ENCODE measurements at regions of chr15 and their contacts with region 1.

Region 1: GRCh38 chr15:84658080-84658787 is at the start of gene NMB:
- DNase-seq: peak; percentile 89 to 99
- ATAC-seq: peak; percentile 78 to 85
- H3K4me3 ChIP-seq: peak within 1 kb of the TSS; percentile 47
- H3K27ac ChIP-seq: peak within 1 kb of the TSS; percentile 83 to 88
- H3K4me1 ChIP-seq: peaks cover 29% of the 10 kb centered on the region
- CTCF ChIP-seq: peak; percentile 83
- EP300 ChIP-seq: no peak
- POLR2A ChIP-seq: peak; percentile 26
- RAD21 ChIP-seq: peak; percentile 38 to 73
- polyA plus RNA-seq, gene NMB: 10.1 and 16.1 TPM in 2 replicates

Region 2: DNA sequence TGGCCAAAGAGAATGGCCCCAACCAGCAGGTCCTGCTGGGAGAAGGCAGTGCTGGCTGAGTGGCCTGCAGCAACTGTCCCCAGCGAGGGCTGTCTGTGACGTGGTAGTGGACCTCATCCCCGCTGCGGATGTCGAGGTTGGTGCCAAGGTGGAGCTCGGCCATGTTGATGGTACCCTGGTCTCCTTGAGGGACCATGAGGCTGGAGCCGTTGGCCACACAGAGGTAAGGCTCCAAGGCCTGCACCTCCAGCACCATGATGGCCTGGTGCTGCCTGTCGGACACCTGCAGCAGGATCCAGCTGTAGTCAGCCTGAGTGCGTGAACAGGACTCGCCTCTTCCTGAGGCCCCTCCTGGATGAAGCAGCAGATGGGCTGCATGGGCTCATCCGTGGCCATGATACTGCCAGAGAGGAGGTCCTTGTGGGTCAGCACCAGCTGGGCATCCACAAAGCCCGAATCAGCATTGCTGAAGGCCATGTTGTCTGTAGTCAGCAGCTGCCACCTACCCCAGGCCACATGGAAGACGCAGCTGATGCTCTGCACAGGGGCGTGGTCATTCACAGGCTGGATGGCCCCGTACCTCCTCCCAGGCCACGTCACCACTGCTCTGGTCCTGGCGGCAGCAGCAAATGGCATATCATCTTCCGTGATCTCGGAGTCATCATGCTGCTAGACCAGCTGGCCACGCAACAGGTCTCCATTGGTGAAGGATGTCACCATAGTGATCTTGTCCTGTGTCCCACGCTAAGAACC is 255.2 kb before region 1 on chr15:
- CTCF ChIA-PET with region 1: no interaction called
- POLR2A ChIA-PET with region 1: no interaction called
- DNase-seq: no peak
- ATAC-seq: no peak
- H3K4me3 ChIP-seq: no peak overlapping the region
- H3K27ac ChIP-seq: no peak overlapping the region
- H3K4me1 ChIP-seq: no peaks in the 10 kb centered on the region
- CTCF ChIP-seq: no peak
- EP300 ChIP-seq: no peak
- POLR2A ChIP-seq: no peak
- RAD21 ChIP-seq: no peak

Region 3: DNA sequence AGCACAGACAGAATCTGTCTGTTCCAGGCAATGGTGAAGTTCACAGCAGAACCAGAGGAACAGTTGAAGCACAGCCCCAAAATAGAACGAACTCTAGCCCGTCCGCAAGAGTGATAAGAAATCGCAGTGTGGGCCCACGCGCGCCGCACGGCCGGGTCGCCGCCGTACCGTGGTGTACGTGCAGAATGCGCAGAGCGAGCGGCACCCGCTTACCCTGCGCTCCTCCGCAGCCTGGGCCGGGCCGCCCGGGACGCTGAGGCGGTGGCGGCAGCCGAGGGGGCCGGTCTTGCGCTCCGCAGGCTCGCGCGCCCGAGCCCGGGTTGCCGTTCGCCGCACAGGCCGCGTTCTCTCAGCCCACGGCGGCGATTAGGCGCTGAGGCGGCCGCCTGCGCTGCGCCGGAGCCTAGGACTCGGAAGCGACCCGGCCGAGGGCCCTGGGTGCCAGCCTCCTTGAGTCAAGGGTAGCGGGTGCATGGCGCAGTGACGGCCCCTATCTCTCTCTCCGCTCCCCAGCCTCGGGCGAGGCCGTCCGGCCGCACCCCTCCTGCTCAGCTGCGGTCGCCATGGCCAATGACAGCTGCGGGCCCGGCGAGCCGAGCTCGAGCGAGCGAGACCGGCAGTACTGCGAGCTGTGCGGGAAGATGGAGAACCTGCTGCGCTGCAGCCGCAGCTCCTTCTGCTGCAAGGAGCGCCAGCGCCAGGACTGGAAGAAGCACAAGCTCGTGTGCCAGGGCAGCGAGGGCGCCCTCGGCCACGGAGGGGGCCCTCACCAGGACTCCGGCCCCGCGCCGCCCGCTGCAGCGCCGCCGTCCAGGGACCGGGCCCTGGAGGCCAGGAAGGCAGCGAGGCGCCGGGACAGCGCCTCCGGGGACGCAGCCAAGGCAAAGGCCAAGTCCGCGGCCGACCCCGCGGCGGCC is 24.7 kb before region 1 on chr15:
- CTCF ChIA-PET with region 1: interaction called, 11 read pairs
- POLR2A ChIA-PET with region 1: interaction called, 11 read pairs
- DNase-seq: peak in 1 of 2 experiments; percentile 78
- ATAC-seq: peak; percentile 72 to 77
- H3K4me3 ChIP-seq: peak overlapping the region; percentile 51
- H3K27ac ChIP-seq: peak overlapping the region; percentile 63 to 87
- H3K4me1 ChIP-seq: peaks cover 24% of the 10 kb centered on the region; the same call in 2 of the 3 replicates
- CTCF ChIP-seq: peak; percentile 31; the same call in 2 of the 3 replicates
- EP300 ChIP-seq: no peak
- POLR2A ChIP-seq: peak; percentile 35
- RAD21 ChIP-seq: no peak; a peak in 2 of 5 replicates

Region 4: DNA sequence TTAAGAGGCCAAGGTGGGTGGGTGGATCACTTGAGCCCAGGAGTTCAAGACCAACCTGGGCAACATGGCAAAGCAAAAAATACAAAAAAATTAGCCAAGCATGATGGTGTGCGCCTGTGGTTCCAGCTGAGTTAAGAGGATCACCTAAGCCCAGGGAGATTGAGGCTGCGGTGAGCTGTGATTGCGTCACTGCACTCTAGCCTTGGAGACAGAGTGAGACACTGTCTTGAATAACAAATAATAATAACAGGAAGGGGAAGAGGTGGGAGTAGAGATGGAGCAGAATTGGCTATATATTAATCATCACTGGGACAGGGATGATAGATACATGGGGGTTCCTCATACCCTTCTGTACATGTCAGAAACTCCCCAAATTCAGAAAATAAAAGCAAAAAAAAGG is 23.6 kb after region 1 on chr15:
- CTCF ChIA-PET with region 1: interaction called, 11 read pairs
- POLR2A ChIA-PET with region 1: interaction called, 6 read pairs
- DNase-seq: no peak
- ATAC-seq: no peak
- H3K4me3 ChIP-seq: no peak overlapping the region
- H3K27ac ChIP-seq: no peak overlapping the region
- H3K4me1 ChIP-seq: peaks cover 24% of the 10 kb centered on the region
- CTCF ChIP-seq: no peak
- EP300 ChIP-seq: no peak
- POLR2A ChIP-seq: no peak
- RAD21 ChIP-seq: no peak

Region 5: GRCh38 chr15:84716036-84716799 is 58.0 kb after region 1 on chr15 and contains the start of gene SEC11A:
- CTCF ChIA-PET with region 1: interaction called, 27 read pairs
- POLR2A ChIA-PET with region 1: interaction called, 27 read pairs
- DNase-seq: peak; percentile 98 to 100
- ATAC-seq: peak; percentile 98 to 99
- H3K4me3 ChIP-seq: peak within 1 kb of the TSS; percentile 91
- H3K27ac ChIP-seq: peak within 1 kb of the TSS; percentile 91 to 99
- H3K4me1 ChIP-seq: peaks cover 19% of the 10 kb centered on the region
- CTCF ChIP-seq: no peak
- EP300 ChIP-seq: no peak
- POLR2A ChIP-seq: peak; percentile 94
- RAD21 ChIP-seq: no peak; a peak in 2 of 5 replicates
- polyA plus RNA-seq, gene SEC11A: 237 and 490 TPM in 2 replicates

Region 6: GRCh38 chr15:85116925-85117680 is 458.9 kb after region 1 on chr15:
- CTCF ChIA-PET with region 1: no interaction called
- POLR2A ChIA-PET with region 1: no interaction called
- DNase-seq: no peak
- ATAC-seq: no peak
- H3K4me3 ChIP-seq: no peak overlapping the region
- H3K27ac ChIP-seq: no peak overlapping the region
- H3K4me1 ChIP-seq: no peaks in the 10 kb centered on the region
- CTCF ChIP-seq: no peak
- EP300 ChIP-seq: no peak
- POLR2A ChIP-seq: no peak
- RAD21 ChIP-seq: no peak

Measured in A549 (cell line).